IMR-90 (cell line): ENCODE measurements at regions of chr1 and their contacts with region 1.

Region 1: GRCh38 chr1:157948312-157949073 is 45.0 kb upstream of the KIRREL1 start:
- DNase-seq: peak; percentile 42
- ATAC-seq: peak; percentile 81
- H3K4me3 ChIP-seq: no peak overlapping the region
- H3K27ac ChIP-seq: no peak overlapping the region
- H3K4me1 ChIP-seq: no peaks in the 10 kb centered on the region
- H3K27me3 ChIP-seq: peaks cover 13% of the 10 kb centered on the region
- CTCF ChIP-seq: peak; percentile 49
- POLR2A ChIP-seq: no peak
- RAD21 ChIP-seq: peak; percentile 60

Region 2: GRCh38 chr1:157773493-157774350 is 174.8 kb before region 1 on chr1:
- CTCF ChIA-PET with region 1: no interaction called
- POLR2A ChIA-PET with region 1: no interaction called
- dilution Hi-C with region 1: no loop called
- in situ Hi-C with region 1: no loop called
- intact Hi-C with region 1: no loop called
- DNase-seq: no peak
- ATAC-seq: no peak
- H3K4me3 ChIP-seq: no peak overlapping the region
- H3K27ac ChIP-seq: no peak overlapping the region
- H3K4me1 ChIP-seq: no peaks in the 10 kb centered on the region
- H3K27me3 ChIP-seq: no peaks in the 10 kb centered on the region
- CTCF ChIP-seq: no peak
- POLR2A ChIP-seq: no peak
- RAD21 ChIP-seq: no peak

Region 3: GRCh38 chr1:157878059-157878458 is 70.4 kb before region 1 on chr1:
- CTCF ChIA-PET with region 1: no interaction called
- POLR2A ChIA-PET with region 1: no interaction called
- dilution Hi-C with region 1: no loop called
- in situ Hi-C with region 1: no loop called
- intact Hi-C with region 1: loop called (anchors 2 kb)
- DNase-seq: peak; percentile 35
- ATAC-seq: peak; percentile 59
- H3K4me3 ChIP-seq: no peak overlapping the region
- H3K27ac ChIP-seq: no peak overlapping the region
- H3K4me1 ChIP-seq: no peaks in the 10 kb centered on the region
- H3K27me3 ChIP-seq: no peaks in the 10 kb centered on the region
- CTCF ChIP-seq: peak; percentile 37
- POLR2A ChIP-seq: no peak
- RAD21 ChIP-seq: peak; percentile 32; the same call in 1 of the 2 replicates

Region 4: DNA sequence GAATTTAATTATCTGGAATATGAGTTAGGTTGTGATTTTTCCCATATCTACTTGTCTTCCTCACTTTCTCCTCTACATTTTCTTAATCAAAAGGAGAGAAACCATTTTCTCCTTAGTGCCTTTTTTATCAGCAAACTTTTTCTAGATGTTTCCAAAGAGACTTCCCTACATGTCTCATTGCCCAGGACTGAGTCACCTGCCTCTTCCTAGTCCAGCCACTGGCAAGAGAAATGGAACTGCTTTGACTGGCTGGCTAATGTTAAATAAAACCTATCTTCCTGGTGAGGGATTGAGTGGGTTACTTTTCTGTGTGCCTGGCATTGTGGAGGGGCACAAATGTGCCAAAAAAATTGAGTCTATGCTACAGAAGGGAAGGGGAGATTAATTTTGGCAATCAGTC is 54.8 kb before region 1 on chr1:
- CTCF ChIA-PET with region 1: no interaction called
- POLR2A ChIA-PET with region 1: no interaction called
- dilution Hi-C with region 1: no loop called
- in situ Hi-C with region 1: no loop called
- intact Hi-C with region 1: no loop called
- DNase-seq: no peak
- ATAC-seq: no peak
- H3K4me3 ChIP-seq: no peak overlapping the region
- H3K27ac ChIP-seq: no peak overlapping the region
- H3K4me1 ChIP-seq: no peaks in the 10 kb centered on the region
- H3K27me3 ChIP-seq: no peaks in the 10 kb centered on the region
- CTCF ChIP-seq: no peak
- POLR2A ChIP-seq: no peak
- RAD21 ChIP-seq: no peak